ENCODE measurements at regions of chr12 and their contacts with region 1.

Region 1: GRCh38 chr12:53054112-53054833 is 4.4 kb downstream of the TNS2 start:
- DNase-seq: no peak
- ATAC-seq: peak; percentile 82
- H3K4me3 ChIP-seq: peak overlapping the region; percentile 69 to 74
- H3K27ac ChIP-seq: peak overlapping the region; percentile 93
- H3K4me1 ChIP-seq: peaks cover 45% of the 10 kb centered on the region
- H3K27me3 ChIP-seq: no peaks in the 10 kb centered on the region
- CTCF ChIP-seq: no peak

Region 2: DNA sequence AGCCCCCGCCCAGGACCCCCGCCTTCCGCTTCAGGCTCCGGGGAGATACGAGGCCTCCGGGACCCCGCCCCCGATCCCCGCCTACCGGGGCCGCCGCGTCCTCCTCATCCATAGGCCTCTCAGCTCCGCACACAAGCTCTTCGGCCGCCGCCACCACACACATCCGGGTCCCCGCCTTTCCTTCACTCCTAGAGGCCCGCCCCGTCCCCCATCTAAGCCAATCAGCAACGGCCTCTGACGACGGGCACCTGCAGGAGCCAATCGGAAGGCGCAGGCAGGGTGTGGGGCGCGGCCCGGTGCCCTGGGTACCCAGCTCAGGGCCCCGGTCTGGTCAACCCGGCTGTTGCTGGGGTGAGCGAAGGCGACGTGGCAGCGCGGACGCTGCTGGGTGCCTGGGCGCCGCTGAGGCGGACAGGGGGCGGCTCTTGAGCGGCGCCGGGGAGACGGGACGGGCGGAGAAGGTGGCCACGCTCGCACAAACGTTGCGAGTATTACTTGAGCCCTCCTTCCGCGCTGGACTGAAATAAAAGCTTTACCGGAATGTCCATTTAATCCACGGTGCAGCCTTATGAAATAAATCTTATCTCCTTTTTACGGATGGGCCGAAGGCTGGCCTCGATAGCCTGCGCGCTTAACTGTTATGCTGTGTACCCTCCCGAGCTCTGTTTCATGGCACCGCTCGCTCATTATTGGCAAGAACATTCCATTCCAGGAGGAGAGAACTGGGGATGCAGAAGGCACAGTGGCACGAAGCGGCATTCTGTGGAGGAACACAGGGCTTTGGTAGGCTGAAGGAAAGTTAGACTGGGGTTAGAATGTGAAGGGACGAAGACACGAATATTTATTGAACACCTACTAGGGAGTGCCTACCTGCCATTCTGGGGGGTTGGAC is 25.2 kb after region 1 on chr12 and contains the start of gene SPRYD3:
- CTCF ChIA-PET with region 1: interaction called, 11 read pairs
- POLR2A ChIA-PET with region 1: interaction called, 3 read pairs
- in situ Hi-C with region 1: no loop called
- intact Hi-C with region 1: no loop called
- DNase-seq: peak; percentile 78
- ATAC-seq: peak; percentile 99
- H3K4me3 ChIP-seq: peak within 1 kb of the TSS; percentile 67 to 89
- H3K27ac ChIP-seq: peak within 1 kb of the TSS; percentile 95
- H3K4me1 ChIP-seq: 0 out of 2 replicates have a peak, but pooled peaks cover 3% of the 10 kb centered on the region
- H3K27me3 ChIP-seq: no peaks in the 10 kb centered on the region
- CTCF ChIP-seq: no peak
- total RNA-seq, gene SPRYD3: 25.0 TPM

Region 3: DNA sequence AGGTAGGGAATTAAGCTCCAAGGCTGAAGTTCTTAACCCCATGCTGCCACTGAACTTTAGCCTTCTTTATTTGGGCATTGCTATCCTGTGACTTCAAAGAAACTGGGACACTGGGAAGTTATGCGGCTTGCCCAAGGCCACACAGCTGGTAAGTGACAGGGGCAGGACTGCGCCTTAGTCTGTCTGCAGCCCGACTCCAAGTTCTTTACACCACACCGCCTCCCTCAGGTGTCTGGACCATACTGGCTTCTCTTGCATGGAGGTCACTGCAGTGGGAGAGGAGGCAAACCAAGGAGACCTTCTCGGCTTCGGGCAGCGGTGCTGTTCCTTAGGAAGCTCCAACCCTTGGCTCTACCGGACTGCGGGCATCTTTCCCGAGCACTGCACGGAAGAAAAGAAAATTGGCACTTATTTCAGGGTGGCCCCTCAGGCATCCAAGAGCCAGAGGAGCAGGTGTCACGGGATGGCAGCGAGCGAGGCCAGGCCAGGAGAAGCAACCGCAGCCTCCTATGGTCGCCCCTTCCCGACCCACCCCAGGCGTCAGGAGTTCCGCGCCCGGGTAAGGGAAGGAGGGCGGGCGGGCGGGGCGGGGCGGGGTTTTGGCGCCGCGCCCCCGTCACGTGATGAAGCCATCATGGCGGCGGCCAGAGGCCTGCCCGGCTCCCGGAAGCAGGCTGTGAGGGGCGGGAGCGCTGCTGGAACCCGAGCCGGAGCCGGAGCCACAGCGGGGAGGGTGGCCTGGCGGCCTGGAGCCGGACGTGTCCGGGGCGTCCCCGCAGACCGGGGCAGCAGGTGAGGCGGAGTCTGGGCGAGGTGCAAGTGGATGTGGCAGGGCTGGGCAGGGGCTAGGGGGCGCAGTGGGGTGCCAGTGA is 197.4 kb after region 1 on chr12:
- CTCF ChIA-PET with region 1: interaction called, 11 read pairs
- POLR2A ChIA-PET with region 1: no interaction called
- in situ Hi-C with region 1: no loop called
- intact Hi-C with region 1: no loop called
- DNase-seq: peak; percentile 63
- ATAC-seq: peak; percentile 92
- H3K4me3 ChIP-seq: peak overlapping the region; percentile 74 to 86
- H3K27ac ChIP-seq: peak overlapping the region; percentile 90
- H3K4me1 ChIP-seq: peaks cover 11% of the 10 kb centered on the region
- H3K27me3 ChIP-seq: no peaks in the 10 kb centered on the region
- CTCF ChIP-seq: peak; percentile 75; the same call in 1 of the 2 replicates

Measured in Panc1 (cell line).